Activated CD8-positive, alpha-beta T cell treated with anti-CD3 and anti-CD28 coated beads for 36 hours (primary cell): ENCODE measurements at regions of chr15 and their contacts with region 1.

Region 1: DNA sequence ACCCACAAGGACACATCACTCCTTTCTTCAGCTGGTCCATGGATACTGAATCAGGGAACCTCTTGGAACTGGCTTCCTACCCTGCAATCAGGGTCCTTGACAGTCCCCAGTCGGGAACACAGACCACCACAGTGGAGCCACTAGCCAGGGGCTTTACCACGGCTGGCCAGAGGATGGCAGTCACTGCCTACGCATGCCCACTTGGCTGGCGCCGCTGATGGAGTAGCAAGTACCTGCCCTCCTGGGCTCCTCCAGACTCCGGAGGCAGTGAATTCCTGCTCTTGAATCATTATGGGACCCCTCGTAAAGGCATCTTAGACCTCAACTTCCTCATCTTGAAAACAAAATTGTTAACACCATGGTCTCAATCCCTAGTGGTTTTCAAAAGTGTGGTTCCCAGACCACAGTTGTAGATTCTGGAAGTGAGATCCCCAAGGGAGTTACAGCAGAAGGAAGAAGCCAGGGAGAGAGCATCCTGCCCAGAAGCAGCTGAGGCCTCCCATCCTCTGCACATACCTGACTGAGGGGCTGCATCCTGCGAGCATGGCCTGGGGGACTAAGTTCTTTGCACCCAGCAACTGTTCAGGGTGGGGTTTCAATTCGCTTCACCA is 9.1 kb upstream of the SKIC8 start:
- DNase-seq: peak; percentile 80
- ATAC-seq: peak; percentile 98
- H3K4me3 Mint-ChIP-seq: no peak overlapping the region
- H3K27ac Mint-ChIP-seq: no peak overlapping the region
- H3K4me1 Mint-ChIP-seq: no peaks in the 10 kb centered on the region
- H3K27me3 Mint-ChIP-seq: peaks cover 5% of the 10 kb centered on the region
- CTCF ChIP-seq: peak; percentile 74

Region 2: GRCh38 chr15:78264304-78265136 is 44.0 kb before region 1 on chr15 and contains the start of gene DNAJA4:
- CTCF ChIA-PET with region 1: no interaction called
- POLR2A ChIA-PET with region 1: no interaction called
- intact Hi-C with region 1: no loop called
- DNase-seq: peak; percentile 69
- ATAC-seq: peak; percentile 71
- H3K4me3 Mint-ChIP-seq: peak within 1 kb of the TSS; percentile 89
- H3K27ac Mint-ChIP-seq: peak within 1 kb of the TSS; percentile 91
- H3K4me1 Mint-ChIP-seq: peaks cover 27% of the 10 kb centered on the region
- H3K27me3 Mint-ChIP-seq: no peaks in the 10 kb centered on the region
- CTCF ChIP-seq: no peak
- total RNA-seq, gene DNAJA4: 38.1 to 38.8 TPM

Region 3: DNA sequence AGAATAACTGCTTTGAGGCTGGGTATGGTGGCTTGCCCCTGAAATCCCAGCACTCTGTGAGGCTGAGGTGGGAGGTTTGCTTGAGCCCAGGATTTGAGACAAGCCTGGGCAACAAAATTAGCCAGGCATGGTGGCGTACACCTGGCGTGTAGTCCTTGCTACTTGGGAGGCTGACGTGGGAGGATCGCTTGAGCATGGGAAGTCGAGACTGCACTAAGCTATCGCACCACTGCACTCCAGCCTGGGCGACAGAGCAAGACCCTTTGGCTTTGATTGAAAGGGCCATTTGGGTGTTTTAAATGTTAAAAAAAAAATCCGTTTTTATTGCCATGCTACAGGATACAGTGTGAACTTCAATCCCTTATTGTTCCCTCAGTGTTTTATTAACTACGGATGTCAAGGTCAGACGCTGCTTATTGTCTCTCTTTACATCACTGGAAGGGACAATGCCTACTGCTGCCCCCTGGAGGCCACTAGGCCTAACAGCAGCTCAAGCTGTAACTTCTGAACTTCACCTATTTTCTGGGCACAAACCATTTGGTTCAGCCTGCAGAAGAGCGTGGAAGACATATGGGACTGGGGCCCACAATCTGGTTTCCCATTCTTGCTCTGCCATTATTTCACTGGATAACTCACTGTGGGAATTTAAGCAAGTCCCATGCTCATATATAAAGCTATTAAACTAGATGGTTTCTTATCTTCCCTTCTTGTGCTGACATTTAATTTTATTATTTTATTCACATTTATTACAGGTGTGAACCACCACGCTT is 114.2 kb after region 1 on chr15:
- CTCF ChIA-PET with region 1: interaction called, 15 read pairs
- POLR2A ChIA-PET with region 1: no interaction called
- intact Hi-C with region 1: loop called (anchors 5 kb)
- DNase-seq: peak; percentile 78
- ATAC-seq: peak; percentile 94
- H3K4me3 Mint-ChIP-seq: no peak overlapping the region
- H3K27ac Mint-ChIP-seq: no peak overlapping the region
- H3K4me1 Mint-ChIP-seq: peaks cover 17% of the 10 kb centered on the region
- H3K27me3 Mint-ChIP-seq: peaks cover 8% of the 10 kb centered on the region
- CTCF ChIP-seq: peak; percentile 91

Region 4: GRCh38 chr15:78481917-78482316 is 173.4 kb after region 1 on chr15:
- CTCF ChIA-PET with region 1: interaction called, 10 read pairs
- POLR2A ChIA-PET with region 1: no interaction called
- intact Hi-C with region 1: no loop called
- DNase-seq: no peak
- ATAC-seq: no peak
- H3K4me3 Mint-ChIP-seq: no peak overlapping the region
- H3K27ac Mint-ChIP-seq: no peak overlapping the region
- H3K4me1 Mint-ChIP-seq: peaks cover 6% of the 10 kb centered on the region
- H3K27me3 Mint-ChIP-seq: no peaks in the 10 kb centered on the region
- CTCF ChIP-seq: no peak